ENCODE measurements at regions of chr22 and their contacts with region 1.

Region 1: DNA sequence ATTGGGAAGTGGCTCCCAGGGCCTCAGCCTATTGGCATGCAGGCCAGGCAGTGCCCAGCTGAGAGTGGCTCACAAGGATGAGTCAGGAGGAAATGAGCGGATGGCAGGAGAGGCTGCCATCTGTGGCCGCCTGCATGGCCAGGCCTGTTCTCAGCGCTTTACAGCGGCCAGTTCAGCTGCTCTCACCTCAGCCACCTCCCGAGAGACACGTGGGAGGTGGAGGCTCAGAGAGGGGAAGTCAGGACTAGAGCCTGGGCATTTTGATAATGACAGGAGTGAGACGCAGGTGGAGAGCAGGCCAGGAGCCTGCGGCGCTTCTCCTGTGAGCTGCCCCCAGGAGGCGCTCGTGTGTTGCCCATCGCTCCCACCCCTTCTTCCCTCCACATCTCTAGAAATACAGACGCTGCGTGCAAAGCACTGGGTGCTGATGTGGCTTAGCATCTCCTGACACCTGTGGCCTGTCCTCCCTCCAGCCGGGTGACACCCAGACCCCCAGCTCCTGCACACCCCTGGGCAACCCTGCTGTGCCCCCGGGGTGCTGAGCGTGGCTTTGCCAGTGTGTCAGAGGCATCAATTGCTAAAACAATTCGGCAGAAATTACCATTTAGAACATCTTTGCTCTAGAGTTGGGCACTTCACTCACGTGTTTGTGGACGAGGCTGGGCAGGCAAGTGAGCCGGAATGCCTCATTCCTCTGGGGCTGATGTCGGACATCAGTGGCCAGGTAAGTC is 21.4 kb upstream of the PANX2 start:
- DNase-seq: peak; percentile 83
- H3K4me3 Mint-ChIP-seq: no peak overlapping the region
- H3K27ac Mint-ChIP-seq: peak overlapping the region; percentile 51
- H3K4me1 Mint-ChIP-seq: peaks cover 4% of the 10 kb centered on the region
- H3K27me3 Mint-ChIP-seq: peaks cover 2% of the 10 kb centered on the region

Region 2: DNA sequence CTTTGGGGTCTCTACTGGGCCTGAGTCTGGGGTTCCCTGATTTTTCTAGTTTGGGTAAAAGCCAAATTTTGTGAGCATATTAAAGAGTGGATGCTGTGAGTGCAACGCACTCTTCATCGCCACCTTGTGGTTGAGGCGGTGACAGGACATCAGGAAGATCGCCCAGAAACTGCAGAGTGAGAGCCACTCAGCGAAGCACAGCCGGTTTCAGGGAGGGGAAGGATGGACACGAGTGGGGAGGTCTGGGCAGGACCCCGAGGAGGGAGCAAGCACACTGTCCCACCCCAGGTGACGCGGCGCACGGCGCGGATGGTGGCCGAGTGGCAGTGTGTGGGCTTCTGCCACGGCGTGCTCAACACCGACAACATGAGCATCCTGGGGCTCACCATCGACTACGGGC is 60.7 kb after region 1 on chr22:
- CTCF ChIA-PET with region 1: interaction called, 40 read pairs
- POLR2A ChIA-PET with region 1: no interaction called
- intact Hi-C with region 1: loop called (anchors 1 kb)
- DNase-seq: peak; percentile 76
- H3K4me3 Mint-ChIP-seq: no peak overlapping the region
- H3K27ac Mint-ChIP-seq: peak overlapping the region; percentile 55
- H3K4me1 Mint-ChIP-seq: peaks cover 10% of the 10 kb centered on the region
- H3K27me3 Mint-ChIP-seq: no peaks in the 10 kb centered on the region